Common myeloid progenitor, CD34-positive (primary cell): ENCODE measurements at regions of chr6 and their contacts with region 1.

Region 1: DNA sequence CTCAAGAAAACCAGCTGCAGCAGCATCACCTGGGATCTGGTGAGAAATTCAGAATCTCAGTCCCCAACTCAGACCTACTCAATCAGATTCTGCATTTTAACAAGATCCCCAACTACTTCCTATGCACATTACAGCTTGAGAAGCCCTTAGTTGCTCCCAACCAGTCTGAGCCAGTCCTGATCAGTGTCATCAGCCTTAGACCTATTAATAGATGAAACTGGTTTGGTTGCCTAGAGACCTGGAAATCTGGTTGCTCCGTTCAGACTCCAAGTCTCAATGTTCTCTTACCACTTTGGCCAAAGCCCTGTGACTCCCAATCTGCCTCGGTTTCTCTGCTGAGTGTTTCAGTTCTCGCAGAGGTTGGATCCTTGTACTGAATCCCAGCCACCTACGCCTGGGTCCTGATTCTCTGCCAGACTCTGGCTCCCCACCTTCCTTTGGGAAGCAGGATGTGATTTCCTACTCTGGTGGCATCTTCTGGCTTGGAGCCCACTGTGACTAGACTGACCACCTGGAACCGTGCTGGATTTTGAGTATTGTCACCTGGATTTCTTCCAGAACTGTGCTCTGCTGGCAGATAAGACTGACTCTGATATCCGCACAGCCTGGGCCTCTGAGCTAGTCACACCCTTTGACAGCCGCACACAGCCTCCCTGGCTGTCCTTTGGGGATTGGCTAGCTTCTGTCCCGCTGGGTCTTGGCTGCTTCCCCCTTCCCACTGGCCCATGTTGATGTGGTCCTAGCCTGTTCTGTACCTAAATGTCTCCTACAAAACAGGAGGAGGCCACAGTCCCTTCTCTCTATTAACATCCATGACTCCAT is 20.3 kb upstream of the ATXN1 start:
- DNase-seq: no peak
- H3K4me3 ChIP-seq: no peak overlapping the region
- H3K27ac ChIP-seq: no peak overlapping the region
- H3K4me1 ChIP-seq: no peaks in the 10 kb centered on the region
- H3K27me3 ChIP-seq: no peaks in the 10 kb centered on the region

Region 2: DNA sequence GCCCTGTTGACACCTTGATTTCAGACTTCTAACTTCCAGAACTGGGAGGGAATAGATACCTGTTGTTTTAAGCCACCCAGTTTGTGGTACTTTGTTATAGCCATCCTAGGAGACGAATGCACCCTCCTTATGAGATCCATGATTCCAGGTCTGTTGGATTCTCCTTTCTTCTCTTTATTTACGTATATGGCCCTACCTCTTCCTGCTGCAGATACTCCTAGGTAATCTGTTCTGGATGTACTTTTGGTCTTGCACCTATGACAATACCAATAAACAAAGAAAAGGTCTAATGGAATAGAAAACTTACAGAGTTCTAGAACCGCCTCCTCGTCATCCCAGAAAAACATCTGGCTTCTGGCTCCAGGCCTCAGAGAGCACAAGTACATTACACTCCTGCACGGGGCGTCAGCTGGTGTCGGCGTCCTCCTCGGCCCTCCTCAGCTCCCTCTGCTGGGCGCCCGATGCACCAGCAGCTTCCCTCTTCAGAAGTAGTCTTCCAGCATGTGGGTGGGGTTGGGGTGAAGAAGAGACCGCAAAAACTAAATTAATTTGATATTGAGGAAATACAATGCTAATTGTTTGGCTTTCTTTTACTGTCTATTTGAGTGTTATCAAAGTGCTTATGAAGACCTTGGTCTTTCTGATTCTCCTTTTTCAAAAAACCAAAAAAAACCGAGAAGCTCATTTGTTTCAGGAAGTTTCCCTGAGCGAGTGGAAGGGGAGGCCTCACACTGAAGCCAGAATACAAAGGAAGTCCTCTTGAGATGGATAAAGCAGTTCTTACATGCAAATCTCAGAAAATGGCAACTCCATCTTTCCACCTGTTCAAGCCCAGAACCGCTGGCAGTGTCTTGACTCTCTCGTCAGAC is 10.6 kb before region 1 on chr6:
- CTCF ChIA-PET with region 1: interaction called, 14 read pairs
- POLR2A ChIA-PET with region 1: no interaction called
- DNase-seq: peak; percentile 81 to 85 (median 83)
- H3K4me3 ChIP-seq: peak overlapping the region in 1 of 7 experiments; percentile 26
- H3K27ac ChIP-seq: no peak overlapping the region
- H3K4me1 ChIP-seq: peaks cover 18 to 40% (median 34%) of the 10 kb centered on the region in 4 experiments
- H3K27me3 ChIP-seq: no peaks in the 10 kb centered on the region